MCF 10A (cell line): ENCODE measurements at regions of chr17 and their contacts with region 1.

Region 1: DNA sequence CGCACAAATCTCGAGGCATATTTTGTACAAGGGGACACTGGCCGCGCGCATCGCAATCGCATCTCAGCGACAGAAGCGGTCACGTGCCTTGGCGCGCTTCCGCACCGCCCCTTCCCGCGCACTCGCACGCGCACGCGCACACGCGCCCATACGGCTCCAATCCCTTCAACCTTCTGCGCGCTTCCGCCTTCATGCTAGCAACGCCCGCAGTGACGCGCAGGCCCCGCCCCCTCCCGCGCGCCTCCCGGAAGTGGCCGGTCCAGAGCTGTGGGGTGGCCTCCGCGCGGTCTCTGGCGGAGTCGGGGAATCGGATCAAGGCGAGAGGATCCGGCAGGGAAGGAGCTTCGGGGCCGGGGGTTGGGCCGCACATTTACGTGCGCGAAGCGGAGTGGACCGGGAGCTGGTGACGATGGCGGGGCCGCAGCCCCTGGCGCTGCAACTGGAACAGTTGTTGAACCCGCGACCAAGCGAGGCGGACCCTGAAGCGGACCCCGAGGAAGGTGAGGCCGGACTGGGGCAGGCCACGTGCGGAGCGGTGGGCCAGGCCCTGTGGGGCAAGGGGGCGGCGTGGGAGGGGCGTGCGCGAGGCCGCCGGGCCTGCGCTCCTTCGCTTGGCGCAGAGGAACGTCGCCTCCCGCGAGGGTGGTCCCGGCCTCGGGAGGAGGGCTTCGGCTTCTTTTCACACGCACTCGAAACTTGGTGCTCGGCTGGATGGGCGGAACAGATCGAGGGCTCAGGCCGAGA is at the start of gene AATF:
- DNase-seq: peak; percentile 97
- H3K4me3 Mint-ChIP-seq: peak within 1 kb of the TSS; percentile 79
- H3K27ac Mint-ChIP-seq: peak within 1 kb of the TSS; percentile 99
- H3K4me1 Mint-ChIP-seq: peaks cover 30% of the 10 kb centered on the region
- H3K27me3 Mint-ChIP-seq: peaks cover 3% of the 10 kb centered on the region
- CTCF ChIP-seq: no peak
- total RNA-seq, gene AATF: 68.9 and 85.2 TPM in 2 replicates

Region 2: DNA sequence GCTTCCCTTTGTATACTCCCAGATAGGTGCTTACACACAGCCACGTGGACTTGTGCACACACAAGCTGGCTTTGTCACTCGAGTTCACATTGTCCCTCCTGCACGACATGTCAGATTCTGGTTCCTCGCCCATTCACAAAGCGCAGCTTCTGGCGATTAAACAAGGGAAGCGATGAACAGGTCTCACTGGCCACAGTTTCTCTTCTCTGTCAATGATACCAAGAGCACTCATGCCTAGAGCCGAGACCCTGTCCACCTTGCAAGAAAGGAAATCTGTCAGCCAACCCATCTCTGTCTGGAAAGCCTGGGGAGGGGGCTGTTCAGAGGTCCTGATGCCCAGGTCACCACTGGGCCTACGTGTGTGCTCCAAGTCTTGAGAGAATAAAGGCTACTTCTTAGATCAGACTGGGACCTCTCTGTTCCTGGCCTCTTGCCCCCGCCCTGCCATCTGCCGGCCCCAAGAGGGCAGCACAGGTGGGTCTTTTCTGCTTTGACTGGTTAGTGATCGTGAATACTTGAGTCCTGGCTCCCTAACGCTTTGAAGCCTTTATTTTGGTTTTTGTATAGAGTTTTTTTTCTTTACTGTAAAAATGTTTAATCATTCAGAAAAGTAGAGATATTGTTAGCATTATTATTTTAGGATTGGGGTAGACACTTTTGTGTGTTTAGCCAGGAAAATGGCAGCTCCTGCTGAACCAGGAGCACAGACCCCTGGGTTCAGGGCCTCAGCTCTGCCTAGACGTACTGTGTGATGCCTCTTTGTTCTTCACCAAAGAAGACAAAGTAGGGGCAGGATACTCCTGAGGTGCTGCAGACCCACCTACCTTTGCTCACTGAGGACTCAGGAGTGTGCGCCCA is 242.8 kb before region 1 on chr17:
- CTCF ChIA-PET with region 1: no interaction called
- POLR2A ChIA-PET with region 1: interaction called, 3 read pairs
- intact Hi-C with region 1: loop called (anchors 1 kb)
- DNase-seq: peak; percentile 58
- H3K4me3 Mint-ChIP-seq: no peak overlapping the region
- H3K27ac Mint-ChIP-seq: no peak overlapping the region
- H3K4me1 Mint-ChIP-seq: peaks cover 5% of the 10 kb centered on the region
- H3K27me3 Mint-ChIP-seq: peaks cover 50% of the 10 kb centered on the region
- CTCF ChIP-seq: peak; percentile 76

Region 3: DNA sequence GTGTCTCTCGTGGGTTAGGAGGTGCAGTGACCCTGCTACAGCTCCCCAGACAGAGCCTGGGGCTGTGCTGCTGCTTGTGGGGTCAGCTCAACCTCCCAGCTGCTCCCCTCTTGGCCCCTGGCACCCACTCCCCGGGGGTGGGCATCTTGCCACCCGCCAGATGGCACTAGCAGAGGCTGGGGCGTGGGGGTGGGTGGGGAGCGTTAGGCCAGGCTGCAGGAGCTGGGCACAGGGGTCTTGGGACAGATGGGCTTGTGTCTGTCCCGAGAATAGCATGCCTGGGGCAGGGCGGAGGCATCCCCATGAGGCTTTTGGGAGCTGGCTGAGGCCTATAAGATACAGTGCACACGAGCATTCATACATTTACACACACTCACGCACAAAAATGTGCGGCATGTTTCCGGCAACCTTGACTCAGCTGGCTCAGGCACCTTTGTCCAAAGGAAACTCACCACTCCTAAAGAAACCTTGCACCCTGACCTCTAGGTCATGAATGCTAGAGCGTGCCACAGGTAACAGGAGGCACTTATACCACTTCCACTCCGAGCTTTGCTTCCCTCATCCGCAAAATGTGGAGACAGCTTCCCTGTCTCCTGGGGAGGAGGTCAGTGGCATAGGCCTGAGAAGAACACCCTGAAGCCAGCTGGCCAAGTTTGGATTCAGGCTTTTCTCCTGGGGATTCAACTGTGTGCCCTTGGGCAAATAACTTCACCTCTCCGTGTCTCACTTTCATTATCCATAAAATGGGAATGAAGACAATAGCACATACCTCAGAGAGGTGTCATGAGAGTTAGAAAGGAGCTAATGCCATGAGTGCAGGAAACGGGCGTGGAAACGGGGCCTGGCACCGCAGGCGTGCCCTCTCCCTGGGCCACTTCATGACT is 90.5 kb before region 1 on chr17:
- CTCF ChIA-PET with region 1: interaction called, 3 read pairs
- POLR2A ChIA-PET with region 1: interaction called, 10 read pairs
- intact Hi-C with region 1: no loop called
- DNase-seq: peak; percentile 66
- H3K4me3 Mint-ChIP-seq: peak overlapping the region; percentile 10
- H3K27ac Mint-ChIP-seq: peak overlapping the region; percentile 77
- H3K4me1 Mint-ChIP-seq: peaks cover 29% of the 10 kb centered on the region
- H3K27me3 Mint-ChIP-seq: no peaks in the 10 kb centered on the region
- CTCF ChIP-seq: no peak

Region 4: DNA sequence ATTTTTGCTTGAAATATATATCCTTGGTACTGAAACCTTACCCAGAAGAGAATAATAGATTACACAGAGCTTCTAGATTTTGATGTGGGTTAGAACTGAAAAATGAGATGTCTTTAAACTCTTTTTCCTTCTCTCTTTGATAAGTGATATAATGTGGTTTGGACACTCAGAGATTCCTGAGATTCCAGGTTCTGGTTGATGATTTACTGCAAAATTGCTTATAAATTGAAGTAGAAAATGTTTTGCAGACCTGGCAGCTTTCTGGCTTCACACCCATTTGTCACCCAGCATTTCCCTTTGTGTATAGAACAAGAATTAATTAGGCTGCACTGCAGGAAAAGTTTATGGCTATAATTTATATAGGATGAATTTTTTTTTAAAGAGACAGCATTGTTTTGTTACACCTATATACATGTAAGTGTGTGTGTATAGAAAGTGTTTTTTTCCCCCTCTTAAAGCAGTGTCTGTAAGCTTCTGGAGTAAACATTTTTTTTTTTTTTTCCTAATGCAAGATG is 23.4 kb after region 1 on chr17:
- CTCF ChIA-PET with region 1: no interaction called
- POLR2A ChIA-PET with region 1: interaction called, 20 read pairs
- intact Hi-C with region 1: no loop called
- DNase-seq: no peak
- H3K4me3 Mint-ChIP-seq: no peak overlapping the region
- H3K27ac Mint-ChIP-seq: no peak overlapping the region
- H3K4me1 Mint-ChIP-seq: peaks cover 20% of the 10 kb centered on the region
- H3K27me3 Mint-ChIP-seq: no peaks in the 10 kb centered on the region
- CTCF ChIP-seq: no peak